ENCODE measurements at regions of chr5 and their contacts with region 1.

Region 1: DNA sequence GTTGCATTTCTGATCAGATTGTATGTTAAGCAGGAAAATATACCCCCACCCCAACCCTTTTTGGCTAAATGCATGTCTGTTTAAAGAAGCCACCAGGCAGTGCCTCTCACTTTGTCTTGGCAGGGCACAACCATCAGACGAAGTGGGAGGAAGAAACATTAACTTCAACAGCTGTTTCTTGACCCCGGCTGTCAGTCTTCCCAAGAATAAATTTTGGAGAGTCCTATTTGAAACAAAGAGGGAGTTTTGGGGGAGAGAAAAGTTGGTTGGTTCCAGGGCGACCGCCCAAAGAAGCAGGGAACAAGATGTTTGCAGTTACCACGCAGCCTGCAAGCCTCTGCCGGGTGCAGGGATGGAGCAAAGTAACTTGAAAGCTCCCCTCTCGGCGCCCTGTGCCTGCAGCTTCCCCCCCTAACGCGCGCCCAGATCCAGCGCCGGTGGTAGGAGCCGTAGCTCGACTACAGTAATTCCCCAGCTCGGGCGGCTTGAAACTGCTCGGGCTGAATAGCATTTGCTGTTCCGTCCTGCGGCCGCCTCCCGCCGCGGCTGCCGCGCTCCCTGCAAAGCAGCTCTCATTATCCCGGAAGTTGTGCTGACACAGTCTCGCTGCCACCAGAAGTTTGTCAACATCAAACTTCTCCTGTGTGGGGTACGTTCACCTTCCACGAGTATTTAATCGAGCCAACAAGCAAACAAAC is 100.7 kb upstream of the SSBP2 start:
- DNase-seq: peak; percentile 93
- H3K4me3 Mint-ChIP-seq: peak overlapping the region; percentile 94
- H3K27ac Mint-ChIP-seq: peak overlapping the region; percentile 93
- H3K4me1 Mint-ChIP-seq: peaks cover 39% of the 10 kb centered on the region
- H3K27me3 Mint-ChIP-seq: no peaks in the 10 kb centered on the region

Region 2: DNA sequence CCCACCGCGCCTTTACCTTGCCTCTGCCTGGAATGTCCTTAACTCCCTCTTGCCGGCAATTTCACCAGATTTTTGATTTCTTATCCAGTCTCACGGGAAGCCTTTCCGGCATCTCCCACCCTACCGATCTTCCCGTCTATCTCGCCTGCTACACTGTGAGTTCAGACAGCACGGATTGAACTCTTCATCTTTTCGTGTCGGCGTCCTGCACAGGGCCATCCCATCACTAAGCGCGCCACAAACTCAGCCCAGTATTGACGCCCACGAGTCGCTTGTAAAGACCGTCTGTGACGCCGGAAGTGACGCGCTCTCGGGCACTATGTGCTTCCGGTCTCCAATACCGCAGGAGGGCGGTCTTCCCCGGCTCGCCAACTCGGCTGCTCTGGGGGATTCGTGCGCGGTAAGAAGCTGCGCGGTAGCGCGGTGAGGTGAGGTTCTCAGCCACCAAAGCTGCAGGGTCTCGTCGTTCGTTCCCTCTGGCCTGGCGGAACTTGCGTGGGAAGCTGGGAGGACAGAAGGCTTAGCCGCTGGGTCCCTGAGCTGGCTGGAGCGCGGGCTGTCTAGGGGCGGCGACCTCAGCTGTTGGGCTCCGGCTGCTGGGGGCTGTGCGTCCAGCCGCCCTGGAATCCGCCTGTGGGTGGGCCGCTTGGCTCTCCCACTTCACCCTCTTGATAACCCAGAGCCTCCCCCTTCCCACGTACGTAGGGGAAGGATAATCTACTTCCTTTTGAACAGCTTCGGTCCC is 550.2 kb before region 1 on chr5 and contains the start of gene ZCCHC9:
- CTCF ChIA-PET with region 1: no interaction called
- POLR2A ChIA-PET with region 1: interaction called, 10 read pairs
- DNase-seq: peak; percentile 94
- H3K4me3 Mint-ChIP-seq: peak within 1 kb of the TSS; percentile 86
- H3K27ac Mint-ChIP-seq: peak within 1 kb of the TSS; percentile 88
- H3K4me1 Mint-ChIP-seq: peaks cover 59% of the 10 kb centered on the region
- H3K27me3 Mint-ChIP-seq: no peaks in the 10 kb centered on the region
- total RNA-seq, gene ZCCHC9: 41.3 to 43.2 TPM

Region 3: DNA sequence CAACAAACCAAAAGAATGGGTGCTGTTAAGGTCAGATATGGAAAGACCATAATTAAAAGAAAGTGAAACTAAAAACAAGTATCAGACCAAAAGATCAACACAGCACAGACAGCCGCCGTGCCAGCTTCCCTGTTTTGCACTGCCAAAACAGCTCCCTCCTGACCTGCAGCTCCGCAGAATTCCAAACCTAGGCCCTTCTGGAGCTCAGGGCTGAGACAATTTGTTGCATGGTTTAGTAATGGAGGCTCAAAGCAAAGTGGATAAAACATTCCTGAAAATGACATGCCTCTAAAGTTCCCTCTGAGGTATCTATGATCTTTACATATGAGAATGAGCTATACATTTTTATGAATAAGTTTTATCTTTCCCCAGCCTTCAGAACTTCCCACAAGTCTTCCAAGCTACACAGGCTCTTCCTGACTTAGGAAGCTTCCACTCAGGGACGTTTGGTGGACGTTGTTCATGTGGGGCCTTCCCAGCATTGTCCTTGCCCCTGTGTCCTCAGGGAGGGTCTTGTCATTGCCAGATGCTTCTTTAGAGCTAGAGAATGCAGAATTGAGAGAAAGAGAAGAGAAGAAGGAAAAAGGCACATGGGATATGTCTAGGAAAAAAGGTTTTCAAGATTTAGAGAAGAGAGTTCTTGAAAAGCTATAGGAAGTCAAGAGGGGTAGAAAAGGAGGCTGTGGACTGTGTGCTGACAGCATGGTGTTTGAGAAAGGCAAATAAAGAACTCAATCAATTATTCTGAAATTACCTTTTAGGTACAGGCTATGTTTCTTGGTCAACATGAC is 72.3 kb before region 1 on chr5:
- CTCF ChIA-PET with region 1: interaction called, 3 read pairs
- POLR2A ChIA-PET with region 1: interaction called, 26 read pairs
- DNase-seq: peak; percentile 53
- H3K4me3 Mint-ChIP-seq: peak overlapping the region; percentile 75
- H3K27ac Mint-ChIP-seq: peak overlapping the region; percentile 60
- H3K4me1 Mint-ChIP-seq: peaks cover 19% of the 10 kb centered on the region
- H3K27me3 Mint-ChIP-seq: no peaks in the 10 kb centered on the region

Region 4: GRCh38 chr5:81971712-81972495 is 120.3 kb after region 1 on chr5 and contains the start of gene ATG10:
- CTCF ChIA-PET with region 1: no interaction called
- POLR2A ChIA-PET with region 1: interaction called, 23 read pairs
- DNase-seq: peak; percentile 89
- H3K4me3 Mint-ChIP-seq: peak within 1 kb of the TSS; percentile 84
- H3K27ac Mint-ChIP-seq: peak within 1 kb of the TSS; percentile 92
- H3K4me1 Mint-ChIP-seq: peaks cover 23% of the 10 kb centered on the region
- H3K27me3 Mint-ChIP-seq: no peaks in the 10 kb centered on the region
- total RNA-seq, gene ATG10: 9.0 to 10.5 TPM

Region 5: DNA sequence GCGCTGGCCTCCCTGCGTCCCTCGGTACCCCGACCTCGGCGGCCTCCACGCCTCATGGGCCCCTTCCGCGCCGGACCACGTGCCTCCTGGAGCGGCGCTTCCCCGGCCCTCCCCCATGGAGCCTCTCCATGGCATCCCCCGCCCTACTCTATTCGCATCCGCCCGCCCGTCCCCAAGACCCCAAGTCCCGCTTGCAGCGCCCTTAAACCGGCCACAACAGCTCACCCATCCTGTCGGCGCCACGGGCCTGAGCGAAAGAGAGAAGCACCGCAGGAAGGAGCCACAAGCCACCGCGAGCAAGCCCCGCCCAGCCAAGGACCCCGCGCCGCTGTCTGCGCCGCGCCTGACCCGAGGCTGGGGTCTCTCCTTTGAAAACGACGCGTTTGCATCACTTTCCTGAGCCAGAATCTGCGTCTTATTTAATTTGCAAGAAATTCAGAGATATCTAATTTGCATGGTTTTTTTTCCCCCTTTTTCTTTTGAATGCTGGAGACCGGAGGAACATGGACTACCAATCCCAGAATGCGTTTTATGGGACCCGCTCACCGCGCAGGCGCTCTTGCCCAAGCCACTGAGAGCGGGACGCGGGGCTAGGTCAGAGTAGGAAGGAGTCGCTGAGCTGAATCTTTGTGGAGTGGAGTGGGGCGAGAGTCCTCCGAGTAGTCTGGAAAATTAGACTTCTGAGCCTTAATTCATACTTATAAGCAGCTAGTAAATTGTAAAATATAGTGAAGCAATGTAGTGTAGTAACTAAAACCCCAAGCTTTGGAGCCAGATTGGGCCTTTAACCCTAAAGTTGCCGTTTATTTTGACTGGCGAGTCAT is 426.7 kb after region 1 on chr5 and contains the start of gene RPS23:
- CTCF ChIA-PET with region 1: interaction called, 4 read pairs
- POLR2A ChIA-PET with region 1: interaction called, 13 read pairs
- DNase-seq: peak; percentile 90
- H3K4me3 Mint-ChIP-seq: peak within 1 kb of the TSS; percentile 82
- H3K27ac Mint-ChIP-seq: peak within 1 kb of the TSS; percentile 88
- H3K4me1 Mint-ChIP-seq: peaks cover 60% of the 10 kb centered on the region
- H3K27me3 Mint-ChIP-seq: no peaks in the 10 kb centered on the region
- total RNA-seq, gene RPS23: 1,639 to 1,645 TPM

Measured in activated CD4-positive, alpha-beta memory T cell treated with anti-CD3 and anti-CD28 coated beads, Interleukin-2, amount 10 ng/mL, durations not matched to agents 7 days and 5 days (primary cell).